ENCODE measurements at regions of chr20 and their contacts with region 1.

Region 1: DNA sequence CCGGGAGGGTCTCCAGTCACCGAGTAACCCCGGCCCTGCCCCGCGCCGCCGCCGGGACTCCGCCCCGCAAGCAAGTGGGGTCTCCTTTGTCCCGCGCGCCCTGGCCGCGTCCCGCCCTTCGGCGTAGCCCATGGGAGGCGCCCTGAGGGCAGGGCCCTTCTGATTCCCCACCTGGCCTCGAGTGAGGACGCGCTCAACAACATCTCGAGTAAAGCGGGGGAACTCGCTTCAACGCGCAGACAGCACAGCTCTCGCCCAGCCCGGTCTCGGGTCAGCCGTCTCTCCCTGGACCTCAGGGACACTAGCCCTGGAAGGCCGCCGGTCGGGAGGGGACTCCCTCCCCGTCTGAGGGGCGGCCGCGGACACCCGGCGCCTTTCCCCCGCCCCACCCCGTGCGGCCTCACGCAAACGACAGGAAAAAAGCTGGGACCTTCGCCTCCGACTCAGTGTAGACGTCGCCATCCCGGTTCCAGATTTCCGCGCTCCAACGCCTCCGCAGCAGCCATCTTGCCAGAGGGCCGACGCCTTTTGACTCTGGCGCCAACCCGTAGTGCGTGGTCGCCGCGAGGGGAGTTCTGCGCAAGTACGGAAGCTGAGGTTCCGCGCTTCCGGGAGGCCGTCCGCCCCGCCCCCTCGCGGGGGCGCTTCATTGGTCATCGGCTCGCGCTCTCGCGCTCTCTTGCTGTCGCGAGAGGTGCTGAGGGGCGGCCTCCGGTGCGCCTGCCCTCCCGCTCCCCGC is 412 bp upstream of the GID8 start:
- DNase-seq: peak; percentile 97
- ATAC-seq: peak; percentile 90
- H3K4me3 Mint-ChIP-seq: no peak overlapping the region
- H3K27ac Mint-ChIP-seq: peak overlapping the region; percentile 95
- H3K4me1 Mint-ChIP-seq: peaks cover 37% of the 10 kb centered on the region
- H3K27me3 Mint-ChIP-seq: no peaks in the 10 kb centered on the region

Region 2: GRCh38 chr20:62921119-62921687 is 16.3 kb before region 1 on chr20:
- CTCF ChIA-PET with region 1: interaction called, 100 read pairs
- POLR2A ChIA-PET with region 1: interaction called, 82 read pairs
- DNase-seq: peak; percentile 82
- ATAC-seq: peak; percentile 57
- H3K4me3 Mint-ChIP-seq: peak overlapping the region; percentile 65
- H3K27ac Mint-ChIP-seq: peak overlapping the region; percentile 81
- H3K4me1 Mint-ChIP-seq: peaks cover 81% of the 10 kb centered on the region
- H3K27me3 Mint-ChIP-seq: no peaks in the 10 kb centered on the region

Measured in activated CD8-positive, alpha-beta T cell treated with anti-CD3 and anti-CD28 coated beads, Interleukin-2, amount 10 ng/mL, durations not matched to agents 7 days and 5 days (primary cell).